ENCODE measurements at regions of chrX and their contacts with region 1.

Region 1: GRCh38 chrX:133045986-133046385 is 50.9 kb downstream of the USP26 start:
- DNase-seq: peak; percentile 60
- ATAC-seq: peak; percentile 76
- H3K4me3 ChIP-seq: no peak overlapping the region
- H3K27ac ChIP-seq: no peak overlapping the region
- H3K4me1 ChIP-seq: no peaks in the 10 kb centered on the region
- H3K27me3 ChIP-seq: no peaks in the 10 kb centered on the region
- CTCF ChIP-seq: peak; percentile 80

Region 2: DNA sequence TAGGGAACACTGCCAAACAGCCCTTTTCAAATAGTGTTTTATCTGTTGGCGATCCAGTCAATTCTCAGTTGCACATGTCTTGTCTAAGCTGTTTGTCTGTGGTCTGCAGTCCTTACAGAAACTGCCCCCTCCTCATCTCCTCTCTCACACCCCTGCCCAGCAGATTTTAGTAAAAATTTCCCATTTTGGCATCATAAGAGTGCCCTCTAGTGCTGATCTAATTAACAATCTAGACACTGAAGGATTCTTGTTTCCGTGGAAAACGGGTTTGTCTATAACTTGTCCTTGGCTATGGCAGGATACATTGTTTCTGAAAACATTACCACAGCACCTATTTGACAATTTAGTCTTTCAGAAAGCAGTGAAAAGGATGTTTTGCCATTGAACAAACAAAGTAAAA is 330.0 kb before region 1 on chrX:
- CTCF ChIA-PET with region 1: no interaction called
- POLR2A ChIA-PET with region 1: no interaction called
- intact Hi-C with region 1: no loop called
- DNase-seq: peak; percentile 10
- ATAC-seq: peak; percentile 33; the same call in 1 of the 2 replicates
- H3K4me3 ChIP-seq: no peak overlapping the region
- H3K27ac ChIP-seq: no peak overlapping the region
- H3K4me1 ChIP-seq: no peaks in the 10 kb centered on the region
- H3K27me3 ChIP-seq: no peaks in the 10 kb centered on the region
- CTCF ChIP-seq: peak; percentile 67

Region 3: GRCh38 chrX:132802033-132802432 is 244.0 kb before region 1 on chrX:
- CTCF ChIA-PET with region 1: no interaction called
- POLR2A ChIA-PET with region 1: no interaction called
- intact Hi-C with region 1: no loop called
- DNase-seq: no peak
- ATAC-seq: no peak
- H3K4me3 ChIP-seq: no peak overlapping the region
- H3K27ac ChIP-seq: no peak overlapping the region
- H3K4me1 ChIP-seq: peaks cover 6% of the 10 kb centered on the region; the same call in 1 of the 2 replicates
- H3K27me3 ChIP-seq: no peaks in the 10 kb centered on the region
- CTCF ChIP-seq: no peak

Region 4: DNA sequence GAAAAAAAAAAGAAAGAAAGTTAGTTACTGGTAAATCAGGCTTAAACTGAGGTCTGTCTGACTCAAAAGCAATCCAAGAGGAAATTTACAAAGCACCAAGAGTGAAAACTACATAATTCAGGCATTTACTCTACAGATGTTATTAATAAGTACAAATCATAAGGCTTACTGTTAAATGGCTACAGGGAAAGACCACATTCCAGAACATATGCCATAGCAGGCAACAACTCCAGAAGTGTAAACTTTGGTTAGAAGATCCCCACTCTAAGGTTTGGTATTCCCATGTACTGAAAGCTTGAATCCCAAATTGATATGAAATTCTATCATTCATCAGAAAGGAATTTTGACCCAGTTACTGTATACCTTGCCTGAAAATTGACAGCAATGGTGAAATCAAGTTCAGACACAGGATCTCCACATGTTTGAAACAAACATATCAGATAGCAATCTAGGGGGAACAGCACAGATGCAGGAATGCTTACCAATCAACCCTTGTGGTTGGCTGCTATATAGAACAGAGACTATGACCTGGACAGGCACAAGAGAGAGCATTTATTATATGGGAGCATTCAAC is 44.3 kb after region 1 on chrX:
- CTCF ChIA-PET with region 1: interaction called, 6 read pairs
- POLR2A ChIA-PET with region 1: no interaction called
- intact Hi-C with region 1: loop called (anchors 5 kb)
- DNase-seq: peak; percentile 23
- ATAC-seq: no peak
- H3K4me3 ChIP-seq: no peak overlapping the region
- H3K27ac ChIP-seq: no peak overlapping the region
- H3K4me1 ChIP-seq: peaks cover 28% of the 10 kb centered on the region
- H3K27me3 ChIP-seq: no peaks in the 10 kb centered on the region
- CTCF ChIP-seq: no peak

Region 5: GRCh38 chrX:133185938-133186337 is 140.0 kb after region 1 on chrX:
- CTCF ChIA-PET with region 1: no interaction called
- POLR2A ChIA-PET with region 1: no interaction called
- intact Hi-C with region 1: no loop called
- DNase-seq: peak; percentile 77
- ATAC-seq: peak; percentile 76
- H3K4me3 ChIP-seq: no peak overlapping the region
- H3K27ac ChIP-seq: peak overlapping the region; percentile 66
- H3K4me1 ChIP-seq: peaks cover 15% of the 10 kb centered on the region
- H3K27me3 ChIP-seq: no peaks in the 10 kb centered on the region
- CTCF ChIP-seq: no peak

Region 6: DNA sequence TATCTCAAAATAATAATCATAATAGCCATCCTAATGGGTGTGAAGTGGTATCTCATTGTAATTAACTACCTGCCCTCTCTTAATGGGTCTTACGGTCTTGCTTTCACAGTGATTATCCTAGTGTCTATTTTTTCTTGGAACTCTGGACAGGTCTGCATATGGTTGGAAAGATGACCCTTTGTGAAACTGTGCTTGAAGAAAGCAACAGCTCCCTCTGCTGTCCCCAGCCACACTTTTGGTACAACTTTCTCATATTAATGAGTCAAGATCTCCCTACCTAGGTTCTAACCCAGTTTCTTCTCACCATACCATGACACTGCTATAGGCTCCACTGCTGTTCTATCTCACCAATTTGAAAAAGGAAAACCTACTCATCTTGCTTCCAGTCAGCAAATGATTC is 169.8 kb after region 1 on chrX:
- CTCF ChIA-PET with region 1: interaction called, 6 read pairs
- POLR2A ChIA-PET with region 1: no interaction called
- intact Hi-C with region 1: loop called (anchors 1 kb)
- DNase-seq: peak; percentile 53
- ATAC-seq: peak; percentile 70
- H3K4me3 ChIP-seq: no peak overlapping the region
- H3K27ac ChIP-seq: no peak overlapping the region
- H3K4me1 ChIP-seq: no peaks in the 10 kb centered on the region
- H3K27me3 ChIP-seq: no peaks in the 10 kb centered on the region
- CTCF ChIP-seq: peak; percentile 69

Region 7: DNA sequence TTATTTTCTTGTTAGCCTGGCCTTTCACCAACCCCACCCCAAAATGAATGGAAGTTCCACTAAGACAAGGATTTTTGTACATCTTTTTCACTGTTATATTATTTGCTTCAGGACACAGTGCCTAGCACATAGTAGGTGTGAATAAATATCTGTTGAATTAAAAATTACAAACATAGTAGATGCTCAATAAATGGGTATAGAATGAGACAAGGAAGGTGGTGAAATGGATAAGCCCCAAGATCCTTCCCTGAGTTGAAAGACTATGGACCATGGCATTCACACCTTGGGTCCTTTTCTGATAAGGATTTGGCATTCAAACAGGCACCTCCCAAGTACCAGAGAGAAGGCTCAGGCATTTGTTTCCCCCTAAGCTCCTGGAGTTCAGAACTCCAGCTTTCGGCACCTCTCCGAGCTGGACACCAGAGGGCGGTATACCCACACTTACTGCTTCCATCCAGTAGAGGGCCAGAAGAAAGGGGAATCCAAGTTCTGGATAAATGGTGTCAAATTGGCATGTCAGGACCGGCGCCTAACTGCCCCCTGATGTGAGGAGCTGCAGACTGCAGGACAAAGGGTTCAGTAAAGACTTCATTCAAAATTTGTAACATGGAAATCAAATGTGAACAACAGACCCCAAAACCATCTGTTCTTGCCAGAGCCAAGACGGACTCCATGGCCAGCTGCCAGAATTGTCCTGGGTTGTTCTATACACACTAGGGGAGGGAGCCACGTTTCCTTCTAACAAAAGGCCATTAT is 746.4 kb after region 1 on chrX:
- CTCF ChIA-PET with region 1: no interaction called
- POLR2A ChIA-PET with region 1: no interaction called
- intact Hi-C with region 1: no loop called
- DNase-seq: peak; percentile 73
- ATAC-seq: peak; percentile 79
- H3K4me3 ChIP-seq: no peak overlapping the region; the same call in 1 of the 2 replicates
- H3K27ac ChIP-seq: no peak overlapping the region
- H3K4me1 ChIP-seq: no peaks in the 10 kb centered on the region
- H3K27me3 ChIP-seq: peaks cover 18% of the 10 kb centered on the region
- CTCF ChIP-seq: peak; percentile 99

Measured in PC-3 (cell line).